Gastrocnemius medialis (tissue), 4 donors: ENCODE measurements at regions of chr19 and their contacts with region 1.

Region 1: GRCh38 chr19:33292595-33293441 is 9.5 kb downstream of the CEBPA start:
- DNase-seq: peak; percentile 34 to 67
- ATAC-seq: peak; percentile 95
- H3K4me3 ChIP-seq: peak overlapping the region in 1 of 4 donors; percentile 21
- H3K27ac ChIP-seq: peak overlapping the region; percentile 58 to 78 (median 70)
- H3K4me1 ChIP-seq: peaks cover 12 to 20% of the 10 kb centered on the region in 2 donors
- H3K27me3 ChIP-seq: no peaks in the 10 kb centered on the region
- CTCF ChIP-seq: no peak
- POLR2A ChIP-seq: peak in 1 of 2 donors; percentile 20

Region 2: GRCh38 chr19:33241530-33242101 is 51.2 kb before region 1 on chr19:
- in situ Hi-C with region 1: no loop called
- intact Hi-C with region 1: loop called (anchors 5 kb)
- DNase-seq: no peak
- ATAC-seq: peak in 1 of 2 donors; percentile 33
- H3K4me3 ChIP-seq: no peak overlapping the region
- H3K27ac ChIP-seq: no peak overlapping the region
- H3K4me1 ChIP-seq: no peaks in the 10 kb centered on the region
- H3K27me3 ChIP-seq: no peaks in the 10 kb centered on the region
- CTCF ChIP-seq: peak; percentile 81 to 91 (median 84)
- POLR2A ChIP-seq: no peak

Region 3: GRCh38 chr19:33388725-33389420 is 96.1 kb after region 1 on chr19:
- in situ Hi-C with region 1: loop called in 1 of 4 experiments (anchors 5 kb)
- intact Hi-C with region 1: no loop called
- DNase-seq: peak in 1 of 2 donors; percentile 82
- ATAC-seq: peak; percentile 40 to 63
- H3K4me3 ChIP-seq: peak overlapping the region in 1 of 4 donors; percentile 10
- H3K27ac ChIP-seq: peak overlapping the region; percentile 79 to 87 (median 84)
- H3K4me1 ChIP-seq: peaks cover 77% of the 10 kb centered on the region in 2 donors
- H3K27me3 ChIP-seq: no peaks in the 10 kb centered on the region
- CTCF ChIP-seq: no peak
- POLR2A ChIP-seq: no peak

Region 4: GRCh38 chr19:33894787-33895186 is 602.0 kb after region 1 on chr19:
- in situ Hi-C with region 1: no loop called
- intact Hi-C with region 1: no loop called
- DNase-seq: no peak
- ATAC-seq: no peak
- H3K4me3 ChIP-seq: no peak overlapping the region
- H3K27ac ChIP-seq: no peak overlapping the region
- H3K4me1 ChIP-seq: no peaks in the 10 kb centered on the region
- H3K27me3 ChIP-seq: no peaks in the 10 kb centered on the region
- CTCF ChIP-seq: no peak
- POLR2A ChIP-seq: no peak